Naive thymus-derived CD4-positive, alpha-beta T cell (primary cell): ENCODE measurements at regions of chr7 and their contacts with region 1.

Region 1: GRCh38 chr7:54060643-54061042 is 481.5 kb upstream of the VSTM2A start:
- DNase-seq: no peak
- ATAC-seq: no peak
- H3K4me3 ChIP-seq: no peak overlapping the region
- H3K4me3 Mint-ChIP-seq: no peak overlapping the region
- H3K27ac ChIP-seq: no peak overlapping the region
- H3K27ac Mint-ChIP-seq: no peak overlapping the region
- H3K4me1 ChIP-seq: no peaks in the 10 kb centered on the region
- H3K4me1 Mint-ChIP-seq: no peaks in the 10 kb centered on the region
- H3K27me3 ChIP-seq: no peaks in the 10 kb centered on the region
- H3K27me3 Mint-ChIP-seq: no peaks in the 10 kb centered on the region

Region 2: GRCh38 chr7:53996876-53997275 is 63.8 kb before region 1 on chr7:
- CTCF ChIA-PET with region 1: no interaction called
- POLR2A ChIA-PET with region 1: no interaction called
- intact Hi-C with region 1: loop called in 1 of 2 experiments (anchors 10 kb)
- DNase-seq: no peak
- ATAC-seq: no peak
- H3K4me3 ChIP-seq: no peak overlapping the region
- H3K4me3 Mint-ChIP-seq: no peak overlapping the region
- H3K27ac ChIP-seq: no peak overlapping the region
- H3K27ac Mint-ChIP-seq: no peak overlapping the region
- H3K4me1 ChIP-seq: no peaks in the 10 kb centered on the region
- H3K4me1 Mint-ChIP-seq: no peaks in the 10 kb centered on the region
- H3K27me3 ChIP-seq: no peaks in the 10 kb centered on the region
- H3K27me3 Mint-ChIP-seq: no peaks in the 10 kb centered on the region

Region 3: DNA sequence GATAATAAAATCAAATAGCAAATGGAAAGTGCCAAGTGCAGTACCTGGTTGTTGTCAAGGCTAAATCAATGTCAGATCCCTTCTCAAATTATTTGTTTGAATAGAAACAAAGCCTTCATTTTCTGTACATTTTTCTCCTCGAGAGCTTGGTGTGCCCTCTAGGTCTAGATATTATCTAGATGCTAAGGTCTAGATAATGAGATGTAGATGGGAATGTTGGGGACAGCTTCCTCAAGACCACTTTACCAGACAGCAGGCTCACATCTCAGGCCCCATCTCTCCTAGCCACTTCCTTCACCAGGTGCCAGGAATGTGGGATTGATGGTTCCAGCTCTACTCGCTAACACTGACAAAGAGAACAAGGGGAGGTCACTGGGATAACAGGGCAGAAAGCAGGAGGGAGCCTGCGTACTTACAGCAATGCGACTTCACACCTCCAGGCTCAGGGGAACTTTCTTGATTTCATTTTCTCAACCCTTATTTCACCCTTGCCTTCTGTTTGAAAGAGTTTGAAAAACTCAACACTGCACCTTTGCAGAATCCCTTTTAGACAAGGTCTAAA is 30.1 kb after region 1 on chr7:
- CTCF ChIA-PET with region 1: no interaction called
- POLR2A ChIA-PET with region 1: no interaction called
- intact Hi-C with region 1: no loop called
- DNase-seq: no peak
- ATAC-seq: no peak
- H3K4me3 ChIP-seq: no peak overlapping the region
- H3K4me3 Mint-ChIP-seq: no peak overlapping the region
- H3K27ac ChIP-seq: no peak overlapping the region
- H3K27ac Mint-ChIP-seq: peak overlapping the region in 1 of 9 donors; percentile 51
- H3K4me1 ChIP-seq: no peaks in the 10 kb centered on the region
- H3K4me1 Mint-ChIP-seq: no peaks in the 10 kb centered on the region
- H3K27me3 ChIP-seq: no peaks in the 10 kb centered on the region
- H3K27me3 Mint-ChIP-seq: no peaks in the 10 kb centered on the region

Region 4: GRCh38 chr7:54242776-54243175 is 182.1 kb after region 1 on chr7:
- CTCF ChIA-PET with region 1: no interaction called
- POLR2A ChIA-PET with region 1: no interaction called
- intact Hi-C with region 1: no loop called
- DNase-seq: no peak
- ATAC-seq: no peak
- H3K4me3 ChIP-seq: no peak overlapping the region
- H3K4me3 Mint-ChIP-seq: no peak overlapping the region
- H3K27ac ChIP-seq: no peak overlapping the region
- H3K27ac Mint-ChIP-seq: no peak overlapping the region
- H3K4me1 ChIP-seq: no peaks in the 10 kb centered on the region
- H3K4me1 Mint-ChIP-seq: peaks cover 0 to 2% (median 0%) of the 10 kb centered on the region in 7 donors
- H3K27me3 ChIP-seq: no peaks in the 10 kb centered on the region
- H3K27me3 Mint-ChIP-seq: no peaks in the 10 kb centered on the region

Region 5: DNA sequence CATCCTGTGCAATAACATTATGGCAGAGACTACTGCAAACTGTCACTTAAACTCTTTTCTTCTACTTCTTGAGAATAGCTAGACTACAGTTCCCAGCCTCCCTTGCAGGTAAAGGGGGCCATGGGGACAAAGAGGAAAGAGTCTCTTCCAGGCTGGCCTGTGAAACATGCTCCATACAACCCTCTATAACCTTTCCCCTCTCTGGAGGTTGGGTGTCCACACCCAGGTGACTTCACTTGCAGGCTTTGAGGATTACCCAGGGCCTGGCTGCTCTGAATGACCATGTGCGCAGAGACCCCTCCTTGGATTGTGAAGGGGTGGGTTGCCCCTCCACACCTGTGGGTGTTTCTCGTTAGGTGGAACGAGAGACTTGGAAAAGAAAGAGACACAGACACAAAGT is 614.2 kb after region 1 on chr7:
- CTCF ChIA-PET with region 1: no interaction called
- POLR2A ChIA-PET with region 1: no interaction called
- intact Hi-C with region 1: no loop called
- DNase-seq: no peak
- ATAC-seq: no peak
- H3K4me3 ChIP-seq: no peak overlapping the region
- H3K4me3 Mint-ChIP-seq: no peak overlapping the region
- H3K27ac ChIP-seq: no peak overlapping the region
- H3K27ac Mint-ChIP-seq: no peak overlapping the region
- H3K4me1 ChIP-seq: no peaks in the 10 kb centered on the region
- H3K4me1 Mint-ChIP-seq: no peaks in the 10 kb centered on the region
- H3K27me3 ChIP-seq: no peaks in the 10 kb centered on the region
- H3K27me3 Mint-ChIP-seq: peaks cover 0 to 18% (median 0%) of the 10 kb centered on the region in 5 donors

Region 6: GRCh38 chr7:54969190-54969971 is 908.7 kb after region 1 on chr7:
- CTCF ChIA-PET with region 1: no interaction called
- POLR2A ChIA-PET with region 1: no interaction called
- intact Hi-C with region 1: no loop called
- DNase-seq: no peak
- ATAC-seq: no peak
- H3K4me3 ChIP-seq: no peak overlapping the region
- H3K4me3 Mint-ChIP-seq: no peak overlapping the region
- H3K27ac ChIP-seq: no peak overlapping the region
- H3K27ac Mint-ChIP-seq: no peak overlapping the region
- H3K4me1 ChIP-seq: no peaks in the 10 kb centered on the region
- H3K4me1 Mint-ChIP-seq: no peaks in the 10 kb centered on the region
- H3K27me3 ChIP-seq: no peaks in the 10 kb centered on the region
- H3K27me3 Mint-ChIP-seq: peaks cover 0 to 35% (median 20%) of the 10 kb centered on the region in 5 donors